ENCODE measurements at regions of chr17 and their contacts with region 1.

Region 1: GRCh38 chr17:29219378-29220047 is 27.1 kb upstream of the CRYBA1 start:
- DNase-seq: peak; percentile 80 to 90 (median 84)
- H3K4me3 ChIP-seq: peak overlapping the region in 1 of 7 experiments; percentile 3
- H3K27ac ChIP-seq: no peak overlapping the region
- H3K4me1 ChIP-seq: peaks cover 0 to 8% (median 5%) of the 10 kb centered on the region in 4 experiments
- H3K27me3 ChIP-seq: no peaks in the 10 kb centered on the region

Region 2: GRCh38 chr17:29124117-29124924 is 95.2 kb before region 1 on chr17:
- CTCF ChIA-PET with region 1: interaction called, 28 read pairs
- POLR2A ChIA-PET with region 1: no interaction called
- DNase-seq: peak; percentile 72 to 85 (median 83)
- H3K4me3 ChIP-seq: no peak overlapping the region
- H3K27ac ChIP-seq: peak overlapping the region in 1 of 2 experiments; percentile 55
- H3K4me1 ChIP-seq: peaks cover 2 to 52% (median 33%) of the 10 kb centered on the region in 4 experiments
- H3K27me3 ChIP-seq: no peaks in the 10 kb centered on the region

Region 3: DNA sequence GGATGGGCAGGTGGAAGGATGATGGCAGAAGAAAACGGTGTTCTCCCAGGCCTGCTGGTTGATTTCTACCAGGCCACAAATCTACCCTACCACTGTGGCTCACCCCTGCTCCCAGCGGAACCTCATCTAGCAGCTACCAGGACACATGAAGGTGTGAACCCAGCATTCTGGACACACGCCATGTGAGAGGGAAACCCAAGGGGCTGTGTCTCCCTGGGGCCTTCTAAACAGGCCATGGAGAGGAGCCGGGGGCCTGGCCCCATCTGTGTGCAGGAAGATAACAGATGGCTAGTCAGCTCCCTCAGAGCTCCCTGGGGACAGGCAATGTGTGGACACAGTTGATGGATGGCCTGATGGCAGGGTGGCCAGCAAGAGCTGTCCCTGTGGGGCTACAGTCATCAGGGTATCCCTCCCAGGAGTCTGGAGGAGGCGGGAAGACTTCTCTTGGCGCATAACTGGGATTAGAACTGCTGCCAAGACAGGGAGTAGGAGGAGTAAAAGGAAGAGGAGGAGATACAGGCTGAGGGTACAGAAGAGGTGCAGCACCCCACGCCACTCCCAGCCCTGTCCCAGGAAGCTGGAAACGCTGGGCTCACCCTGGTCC is 56.7 kb before region 1 on chr17:
- CTCF ChIA-PET with region 1: interaction called, 12 read pairs
- POLR2A ChIA-PET with region 1: no interaction called
- DNase-seq: no peak
- H3K4me3 ChIP-seq: no peak overlapping the region
- H3K27ac ChIP-seq: no peak overlapping the region
- H3K4me1 ChIP-seq: peaks cover 0 to 16% (median 4%) of the 10 kb centered on the region in 4 experiments
- H3K27me3 ChIP-seq: no peaks in the 10 kb centered on the region

Region 4: DNA sequence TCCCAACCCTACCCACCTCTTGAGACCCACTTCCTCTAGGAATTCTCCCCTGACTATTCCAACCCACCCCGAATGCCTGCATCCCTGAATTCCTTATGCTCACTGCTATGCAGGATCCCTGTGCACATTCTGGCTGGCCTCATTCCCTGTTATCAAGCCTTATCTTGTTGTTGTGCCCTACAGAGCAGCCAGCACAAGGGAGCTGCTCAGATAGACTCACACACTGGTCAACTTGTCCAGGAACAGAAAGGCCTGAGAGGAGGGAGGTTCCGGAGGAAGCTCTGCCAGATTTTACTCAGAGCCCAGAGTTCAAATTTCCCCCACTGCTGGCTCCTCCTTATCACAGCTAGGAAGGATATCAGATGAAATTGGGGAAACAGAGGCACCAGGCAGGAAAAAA is 14.5 kb before region 1 on chr17:
- CTCF ChIA-PET with region 1: interaction called, 53 read pairs
- POLR2A ChIA-PET with region 1: no interaction called
- DNase-seq: no peak
- H3K4me3 ChIP-seq: no peak overlapping the region
- H3K27ac ChIP-seq: no peak overlapping the region
- H3K4me1 ChIP-seq: no peaks in the 10 kb centered on the region
- H3K27me3 ChIP-seq: peaks cover 0 to 2% (median 0%) of the 10 kb centered on the region in 5 experiments

Region 5: DNA sequence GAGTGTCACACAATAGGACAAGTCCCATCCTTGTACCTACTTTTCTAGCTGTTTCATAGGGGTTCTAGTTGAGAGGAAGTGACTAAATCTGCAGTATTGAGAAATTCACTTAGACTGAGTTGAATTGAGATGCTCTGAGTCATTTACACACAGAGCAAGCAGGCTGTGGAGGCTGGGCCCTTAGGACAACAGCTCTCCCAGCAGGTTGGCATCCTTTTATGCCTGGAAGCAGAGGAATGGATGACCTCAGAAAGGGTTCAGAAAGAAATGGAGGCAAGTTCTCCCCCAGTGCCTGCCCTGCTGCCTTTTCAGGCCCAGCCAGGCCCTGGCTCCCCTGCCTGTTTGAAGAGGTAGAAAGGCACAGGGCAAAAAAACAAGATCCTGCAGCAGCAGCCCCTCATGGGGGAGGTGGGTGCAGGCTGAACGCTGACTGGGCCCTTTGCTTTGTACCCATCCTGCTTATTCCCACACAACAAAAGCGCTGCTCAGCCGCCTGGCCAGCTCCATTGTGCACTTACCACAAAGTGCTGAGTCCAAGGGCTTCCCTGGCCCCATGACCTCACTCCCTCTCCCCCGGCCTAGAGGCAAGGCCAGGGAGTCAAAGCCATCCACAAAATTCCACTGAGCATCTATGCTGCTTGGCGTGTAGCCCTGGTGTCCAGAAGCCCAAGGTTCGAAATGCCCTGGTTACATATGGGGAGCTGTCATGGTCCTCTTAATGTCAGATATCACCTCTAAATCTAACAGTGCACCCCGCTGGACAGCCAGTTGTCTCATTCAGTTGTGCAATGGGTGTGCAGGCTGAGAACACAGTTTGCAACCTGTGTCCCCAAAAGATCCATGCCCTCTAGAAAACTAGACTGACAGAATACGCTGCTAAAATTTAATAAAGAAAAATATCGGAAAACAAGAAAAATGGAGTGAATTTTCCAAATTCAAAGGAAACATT is 21.8 kb after region 1 on chr17:
- CTCF ChIA-PET with region 1: interaction called, 10 read pairs
- POLR2A ChIA-PET with region 1: no interaction called
- DNase-seq: peak; percentile 22 to 63 (median 57)
- H3K4me3 ChIP-seq: no peak overlapping the region
- H3K27ac ChIP-seq: no peak overlapping the region
- H3K4me1 ChIP-seq: peaks cover 0 to 32% (median 3%) of the 10 kb centered on the region in 4 experiments
- H3K27me3 ChIP-seq: no peaks in the 10 kb centered on the region

Region 6: GRCh38 chr17:29273924-29274323 is 54.4 kb after region 1 on chr17:
- CTCF ChIA-PET with region 1: no interaction called
- POLR2A ChIA-PET with region 1: no interaction called
- DNase-seq: no peak
- H3K4me3 ChIP-seq: no peak overlapping the region
- H3K27ac ChIP-seq: no peak overlapping the region
- H3K4me1 ChIP-seq: no peaks in the 10 kb centered on the region
- H3K27me3 ChIP-seq: no peaks in the 10 kb centered on the region

Region 7: GRCh38 chr17:29664743-29665480 is 445.4 kb after region 1 on chr17:
- CTCF ChIA-PET with region 1: no interaction called
- POLR2A ChIA-PET with region 1: no interaction called
- DNase-seq: no peak
- H3K4me3 ChIP-seq: no peak overlapping the region
- H3K27ac ChIP-seq: no peak overlapping the region
- H3K4me1 ChIP-seq: peaks cover 0 to 6% (median 3%) of the 10 kb centered on the region in 4 experiments
- H3K27me3 ChIP-seq: no peaks in the 10 kb centered on the region

Measured in common myeloid progenitor, CD34-positive (primary cell).